Heart right ventricle (tissue), 16 donors: ENCODE measurements at regions of chr2 and their contacts with region 1.

Region 1: GRCh38 chr2:235551965-235552364 is 58.1 kb downstream of the AGAP1 start:
- DNase-seq: peak; percentile 40 to 51
- ATAC-seq: peak; percentile 67 to 85 (median 76)
- H3K4me3 ChIP-seq: peak overlapping the region in 1 of 10 donors; percentile 13
- H3K27ac ChIP-seq: no peak overlapping the region
- H3K4me1 ChIP-seq: peaks cover 13 to 45% (median 22%) of the 10 kb centered on the region in 9 donors
- H3K27me3 ChIP-seq: no peaks in the 10 kb centered on the region
- CTCF ChIP-seq: peak; percentile 29 to 77 (median 59)

Region 2: DNA sequence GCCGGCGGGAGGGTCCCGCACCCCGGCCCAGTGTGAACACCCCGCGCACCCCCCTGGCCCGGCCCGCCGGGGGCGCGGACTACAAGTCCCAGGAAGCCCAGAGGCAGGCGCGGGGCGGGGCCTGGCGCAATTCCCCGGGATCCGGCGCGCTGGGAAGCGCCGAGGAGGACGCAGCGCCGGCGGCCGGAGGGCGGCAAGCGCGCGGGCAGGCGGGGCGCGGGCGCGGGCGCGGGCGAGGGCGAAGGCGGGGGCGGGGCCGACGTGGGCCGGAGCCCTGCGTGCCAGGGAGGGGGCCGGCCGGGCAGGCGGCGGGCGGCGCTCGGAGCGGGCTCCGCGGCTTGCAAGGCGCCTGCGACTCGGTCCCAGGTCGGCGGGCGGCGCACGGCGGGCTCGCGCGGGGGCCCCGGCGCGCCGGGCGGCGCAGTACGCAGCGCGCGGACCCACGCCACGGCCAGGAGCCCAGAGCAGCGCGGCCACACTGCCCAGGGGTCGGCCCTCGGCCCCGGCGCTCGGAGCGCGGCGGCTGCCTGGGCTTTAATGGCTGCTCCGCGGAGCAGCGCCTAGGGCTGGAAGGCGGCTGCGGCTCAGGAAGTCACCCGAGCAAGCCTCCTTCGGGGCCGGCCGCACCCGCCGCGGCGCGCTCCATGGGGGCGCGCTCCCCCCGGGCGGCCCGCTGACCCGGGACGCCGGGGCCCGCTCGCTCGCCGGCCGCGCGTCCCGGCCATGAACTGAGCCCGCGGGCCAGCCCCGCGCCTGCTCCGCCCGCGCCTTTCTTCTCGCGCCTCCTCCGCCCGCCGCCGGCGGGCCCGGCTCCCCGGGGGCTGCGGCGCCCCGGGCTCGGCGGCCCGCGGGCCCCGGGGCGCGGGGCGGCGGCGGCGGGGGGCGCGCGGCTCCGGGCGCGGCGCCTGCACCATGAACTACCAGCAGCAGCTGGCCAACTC is 57.9 kb before region 1 on chr2 and contains the start of gene AGAP1:
- intact Hi-C with region 1: loop called in 1 of 10 experiments (anchors 2 kb)
- DNase-seq: peak; percentile 87 to 92
- ATAC-seq: peak; percentile 87 to 93 (median 92)
- H3K4me3 ChIP-seq: peak within 1 kb of the TSS; percentile 54 to 90 (median 68)
- H3K27ac ChIP-seq: peak within 1 kb of the TSS; percentile 44 to 87 (median 82)
- H3K4me1 ChIP-seq: peaks cover 8 to 42% (median 25%) of the 10 kb centered on the region in 9 donors
- H3K27me3 ChIP-seq: peaks cover 0 to 36% (median 0%) of the 10 kb centered on the region in 7 donors
- CTCF ChIP-seq: peak in 1 of 9 donors; percentile 9
- total RNA-seq, gene AGAP1: 17.5 to 29.2 (median 20.4) TPM